GM13976 (cell line): ENCODE measurements at regions of chr11 and their contacts with region 1.

Region 1: GRCh38 chr11:14907411-14908213 is 15.6 kb upstream of the CYP2R1 start:
- DNase-seq: peak; percentile 28
- CTCF ChIP-seq: peak; percentile 88

Region 2: GRCh38 chr11:14789879-14790484 is 117.6 kb before region 1 on chr11:
- in situ Hi-C with region 1: loop called (anchors 10 kb)
- DNase-seq: no peak
- CTCF ChIP-seq: peak; percentile 8

Region 3: DNA sequence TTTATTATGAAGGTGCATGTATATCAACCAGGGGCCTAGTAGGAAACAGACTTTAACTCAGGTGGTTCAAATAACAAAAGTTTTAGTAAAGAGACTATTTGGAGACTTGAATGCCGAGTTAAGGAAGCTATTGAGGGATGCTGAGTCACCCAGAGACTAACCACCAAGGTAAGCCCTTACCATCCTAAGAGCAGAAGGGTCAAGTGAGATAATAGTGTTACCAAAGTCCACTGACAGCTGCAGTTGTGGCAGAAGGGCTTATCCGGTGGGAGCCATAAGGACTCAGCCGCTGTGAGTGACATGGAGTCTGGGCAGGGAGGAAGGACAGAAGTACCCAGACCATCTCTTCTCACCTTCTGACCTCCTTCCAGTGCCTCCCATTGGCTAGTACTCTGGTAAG is 341.1 kb after region 1 on chr11:
- in situ Hi-C with region 1: no loop called
- DNase-seq: no peak
- CTCF ChIP-seq: no peak

Region 4: DNA sequence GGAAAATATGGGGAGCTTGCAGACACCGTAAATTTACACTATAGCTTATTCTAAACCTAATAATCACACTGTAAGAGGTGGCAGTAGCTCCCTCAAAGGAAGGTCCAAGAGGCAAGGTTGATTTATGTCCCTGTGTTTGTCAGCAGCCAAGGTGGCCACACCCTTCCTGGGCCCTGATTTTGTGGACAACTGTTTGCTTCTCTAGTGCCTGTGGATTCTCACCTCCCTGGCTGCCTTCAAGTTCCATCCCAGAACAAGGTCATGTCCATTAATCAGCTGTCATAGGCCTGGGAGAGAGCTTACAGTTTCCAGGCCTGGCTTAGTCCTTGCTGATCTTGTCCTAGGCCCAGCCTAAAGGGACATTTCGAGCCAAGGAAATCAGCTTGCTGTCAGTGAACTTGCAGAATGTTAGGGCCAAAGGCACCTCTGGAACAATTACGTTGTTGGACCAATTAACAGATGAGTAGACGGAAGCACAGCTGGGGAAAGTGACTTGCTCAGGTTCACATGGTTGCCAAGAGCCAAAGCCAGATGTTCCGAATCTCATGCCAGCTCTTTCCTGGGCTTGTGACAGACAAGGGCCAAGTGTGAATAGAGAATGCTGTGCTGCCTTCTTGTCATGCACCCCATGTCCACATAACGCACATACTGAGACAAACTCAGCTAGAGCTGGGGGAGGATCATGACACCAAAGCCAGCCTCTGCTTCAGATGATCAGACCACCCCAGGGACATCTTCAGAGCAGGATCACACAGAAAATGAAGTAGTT is 823.2 kb after region 1 on chr11:
- in situ Hi-C with region 1: no loop called
- DNase-seq: no peak
- CTCF ChIP-seq: no peak